ENCODE measurements at regions of chr18 and their contacts with region 1.

Region 1: DNA sequence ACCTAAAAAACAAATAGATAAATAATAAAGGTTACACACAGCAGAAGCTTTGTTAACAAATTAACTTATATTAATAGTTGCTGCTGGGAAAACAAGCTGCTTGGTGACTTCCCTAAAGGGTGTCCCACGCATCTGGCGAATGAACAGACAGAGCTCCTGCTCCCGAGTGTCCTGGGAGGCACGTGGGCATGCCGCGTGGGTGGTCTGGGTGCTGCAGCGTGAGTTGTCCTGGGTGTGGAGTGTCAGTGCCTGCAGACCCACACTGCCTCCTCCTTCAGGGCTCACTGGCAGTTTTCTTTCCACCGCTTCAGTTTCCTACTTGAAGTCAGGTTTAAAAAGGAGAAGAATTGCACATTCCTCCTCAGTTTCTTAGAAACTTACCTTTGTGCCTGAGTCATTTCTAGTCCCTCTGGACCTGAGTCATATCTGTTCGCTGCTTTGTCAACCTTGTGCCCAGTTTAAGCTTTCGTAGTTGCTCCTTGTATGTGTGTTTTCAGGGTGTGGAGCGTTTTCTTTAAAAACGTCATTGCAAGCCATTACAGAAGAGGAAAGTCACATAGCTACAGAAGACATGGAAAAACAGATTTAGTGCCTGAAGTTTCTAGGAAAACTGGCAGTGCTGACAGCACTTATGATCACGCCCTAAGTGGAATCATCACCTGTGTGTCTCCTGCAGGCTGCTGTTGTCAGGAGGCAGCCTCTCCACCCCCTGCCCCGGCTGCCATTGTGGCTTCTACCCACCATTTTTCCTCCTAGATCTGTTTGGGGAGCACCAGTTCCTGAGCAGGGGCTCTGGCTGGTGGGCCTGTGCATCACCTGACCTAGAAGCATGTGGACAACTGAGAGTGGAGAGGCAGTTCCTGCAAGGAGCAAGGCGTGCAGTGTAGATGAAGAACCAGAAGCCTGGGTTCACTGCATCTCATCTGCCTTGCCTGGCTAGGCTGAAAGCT is 24.5 kb downstream of the IMPA2 start:
- DNase-seq: peak; percentile 89
- H3K4me3 ChIP-seq: peak overlapping the region in 1 of 3 experiments; percentile 4
- H3K27ac ChIP-seq: peak overlapping the region; percentile 89
- H3K4me1 ChIP-seq: peaks cover 19% of the 10 kb centered on the region
- H3K27me3 ChIP-seq: no peaks in the 10 kb centered on the region
- CTCF ChIP-seq: no peak

Region 2: DNA sequence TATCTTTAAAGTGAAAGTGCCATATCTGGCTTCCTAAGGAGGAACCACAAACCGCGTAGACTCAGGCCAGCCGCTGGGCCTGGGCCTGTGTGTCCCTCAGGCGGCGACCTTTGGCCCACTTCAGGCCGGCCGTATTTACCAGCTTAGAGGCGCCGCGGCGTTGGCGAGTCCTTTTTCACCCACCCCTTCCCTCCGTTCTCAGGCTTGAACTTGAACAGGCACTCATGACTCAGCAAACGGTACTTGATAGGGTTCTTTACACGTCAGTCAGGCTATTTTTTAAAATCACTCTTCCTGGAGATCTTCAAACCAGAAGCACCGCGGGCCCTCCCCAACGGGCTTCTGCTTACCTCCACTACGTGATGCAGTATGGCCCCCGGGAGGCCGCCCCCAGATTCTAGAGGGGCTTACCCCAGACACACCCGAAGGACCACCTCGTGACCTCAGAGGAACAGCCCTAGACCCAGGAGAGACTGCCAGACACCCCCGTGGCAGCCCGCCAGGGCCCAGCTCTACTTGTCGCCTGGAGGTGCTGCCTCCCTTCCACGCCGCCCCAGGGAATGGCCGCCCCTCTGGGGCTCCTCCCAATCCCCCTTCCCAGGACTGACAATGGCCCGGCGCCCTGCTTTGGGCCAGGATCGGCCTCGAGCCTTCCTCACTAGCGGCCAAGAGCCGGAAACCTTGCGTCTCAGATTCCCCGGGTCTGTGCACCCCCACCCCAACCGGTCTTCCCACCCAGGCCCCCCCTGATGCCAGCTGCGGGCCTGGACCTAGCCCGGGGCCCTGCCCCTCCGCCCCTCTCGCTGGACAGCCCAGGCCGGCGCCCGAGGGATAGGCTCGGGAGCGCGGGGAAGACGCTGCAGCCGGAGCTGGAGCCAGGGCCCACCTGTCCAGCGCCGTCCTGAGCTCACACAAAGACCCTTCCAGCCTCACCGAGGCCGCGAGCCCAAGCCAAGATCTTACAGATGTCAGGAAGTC is 58.3 kb before region 1 on chr18:
- CTCF ChIA-PET with region 1: no interaction called
- dilution Hi-C with region 1: no loop called
- in situ Hi-C with region 1: no loop called
- intact Hi-C with region 1: loop called (anchors 2 kb)
- DNase-seq: peak; percentile 95
- H3K4me3 ChIP-seq: no peak overlapping the region
- H3K27ac ChIP-seq: peak overlapping the region; percentile 57
- H3K4me1 ChIP-seq: peaks cover 17% of the 10 kb centered on the region
- H3K27me3 ChIP-seq: no peaks in the 10 kb centered on the region
- CTCF ChIP-seq: no peak

Region 3: DNA sequence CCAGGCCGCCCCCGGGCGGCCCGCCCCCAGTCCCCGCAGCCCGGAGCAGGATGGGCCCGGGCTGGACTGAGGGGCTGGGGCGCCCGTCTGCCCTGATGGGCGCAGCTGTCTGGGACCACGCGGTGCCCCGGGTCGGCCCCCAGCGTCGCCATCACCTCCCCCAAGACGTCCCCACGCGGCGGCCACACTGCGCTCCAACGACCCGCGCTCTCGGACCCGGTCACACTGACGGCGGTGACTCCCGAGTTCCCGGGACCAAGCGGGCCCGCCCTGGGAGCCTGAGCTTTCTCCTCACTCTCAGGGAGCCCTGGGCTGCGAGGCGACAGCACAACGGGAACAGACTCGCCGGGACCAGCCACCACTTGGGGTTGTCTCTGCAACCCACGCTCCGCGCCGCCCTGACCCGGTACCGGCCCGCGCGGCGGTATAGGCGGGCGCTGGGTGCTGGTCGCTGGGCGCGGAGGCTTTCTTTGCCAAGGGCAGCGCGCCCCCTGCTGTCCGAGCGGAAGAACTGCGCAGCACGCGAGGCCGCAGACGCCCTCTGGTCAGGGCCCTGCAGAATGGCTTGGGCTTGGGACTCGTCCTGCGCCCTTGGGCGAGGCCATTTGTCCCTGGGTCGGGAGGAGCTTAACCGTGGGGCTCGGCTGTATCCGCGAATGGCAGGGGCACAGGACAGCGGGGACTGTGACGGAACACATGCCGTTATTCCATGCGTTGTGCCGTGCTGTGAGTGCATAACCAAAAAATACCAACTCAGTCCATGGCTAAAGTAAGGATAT is 33.0 kb after region 1 on chr18:
- CTCF ChIA-PET with region 1: interaction called, 7 read pairs
- dilution Hi-C with region 1: no loop called
- in situ Hi-C with region 1: no loop called
- intact Hi-C with region 1: loop called (anchors 2 kb)
- DNase-seq: peak; percentile 61
- H3K4me3 ChIP-seq: peak overlapping the region; percentile 33 to 53 (median 41)
- H3K27ac ChIP-seq: peak overlapping the region; percentile 22
- H3K4me1 ChIP-seq: peaks cover 20% of the 10 kb centered on the region
- H3K27me3 ChIP-seq: no peaks in the 10 kb centered on the region
- CTCF ChIP-seq: peak; percentile 73 to 93

Measured in mammary epithelial cell (primary cell).